ENCODE measurements at regions of chr19 and their contacts with region 1.

Region 1: DNA sequence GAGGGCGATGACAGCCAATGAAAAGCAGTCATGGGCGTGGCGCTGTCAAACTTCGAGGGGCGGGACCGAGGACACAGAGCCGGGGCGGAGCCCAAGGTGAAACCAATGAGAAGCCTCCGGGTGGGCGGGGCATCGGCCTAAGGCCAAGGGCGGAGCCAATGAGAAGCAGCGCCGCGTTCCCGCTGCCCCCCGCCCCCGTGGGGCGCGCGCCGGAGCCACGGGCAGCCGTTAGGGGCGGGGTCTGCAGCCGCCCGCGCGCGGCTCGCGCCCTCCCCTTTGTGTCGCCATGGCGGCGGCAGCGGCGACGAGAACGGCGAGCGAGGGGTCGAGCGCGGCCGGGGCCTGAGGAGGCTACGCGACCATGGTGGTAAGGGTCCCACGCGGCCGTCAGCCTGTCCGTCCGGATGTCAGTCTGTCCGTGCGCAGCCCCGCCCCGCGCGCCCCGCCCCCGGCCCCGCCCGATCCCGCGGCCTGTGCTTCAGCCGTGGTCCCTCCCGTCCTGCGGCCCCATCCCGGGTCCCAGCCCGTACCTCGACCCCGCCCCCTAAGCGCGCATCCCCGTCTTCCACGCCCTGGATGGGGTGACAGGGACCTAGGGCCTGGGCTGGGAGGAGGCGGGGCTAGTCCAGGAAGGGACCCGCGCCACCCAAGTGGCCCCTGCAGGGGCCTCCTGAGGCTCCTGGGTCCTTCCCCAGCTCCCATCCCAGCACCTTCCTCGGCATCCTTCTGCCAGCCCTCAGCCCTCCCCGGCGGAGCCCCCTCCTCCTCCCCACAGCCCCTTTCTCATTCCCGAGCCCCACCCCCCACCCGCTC is at the start of gene ARHGAP33:
- DNase-seq: peak; percentile 100
- ATAC-seq: peak; percentile 98
- H3K4me3 Mint-ChIP-seq: peak within 1 kb of the TSS; percentile 75
- H3K27ac Mint-ChIP-seq: no peak within 1 kb of the TSS
- H3K4me1 Mint-ChIP-seq: peaks cover 12% of the 10 kb centered on the region
- H3K27me3 Mint-ChIP-seq: no peaks in the 10 kb centered on the region
- total RNA-seq, gene ARHGAP33: 27.8 to 35.2 TPM

Region 2: GRCh38 chr19:35657904-35658700 is 117.4 kb before region 1 on chr19:
- CTCF ChIA-PET with region 1: no interaction called
- POLR2A ChIA-PET with region 1: no interaction called
- intact Hi-C with region 1: no loop called
- DNase-seq: peak; percentile 33
- ATAC-seq: peak; percentile 53
- H3K4me3 Mint-ChIP-seq: no peak overlapping the region
- H3K27ac Mint-ChIP-seq: no peak overlapping the region
- H3K4me1 Mint-ChIP-seq: peaks cover 2% of the 10 kb centered on the region
- H3K27me3 Mint-ChIP-seq: no peaks in the 10 kb centered on the region

Region 3: GRCh38 chr19:35693830-35694599 is 81.5 kb before region 1 on chr19:
- CTCF ChIA-PET with region 1: no interaction called
- POLR2A ChIA-PET with region 1: no interaction called
- intact Hi-C with region 1: loop called in 1 of 2 experiments (anchors 1 kb)
- DNase-seq: peak; percentile 95
- ATAC-seq: peak; percentile 97
- H3K4me3 Mint-ChIP-seq: no peak overlapping the region
- H3K27ac Mint-ChIP-seq: peak overlapping the region; percentile 43
- H3K4me1 Mint-ChIP-seq: peaks cover 17% of the 10 kb centered on the region
- H3K27me3 Mint-ChIP-seq: no peaks in the 10 kb centered on the region

Region 4: GRCh38 chr19:35740423-35741202 is 34.9 kb before region 1 on chr19:
- CTCF ChIA-PET with region 1: no interaction called
- POLR2A ChIA-PET with region 1: no interaction called
- intact Hi-C with region 1: loop called (anchors 1 to 2 kb)
- DNase-seq: peak; percentile 99
- ATAC-seq: peak; percentile 67
- H3K4me3 Mint-ChIP-seq: peak overlapping the region; percentile 82
- H3K27ac Mint-ChIP-seq: peak overlapping the region; percentile 96
- H3K4me1 Mint-ChIP-seq: peaks cover 28% of the 10 kb centered on the region
- H3K27me3 Mint-ChIP-seq: no peaks in the 10 kb centered on the region

Region 5: GRCh38 chr19:35757749-35758608 is 17.5 kb before region 1 on chr19 and contains the start of gene PROSER3:
- CTCF ChIA-PET with region 1: no interaction called
- POLR2A ChIA-PET with region 1: no interaction called
- intact Hi-C with region 1: loop called (anchors 1 to 2 kb)
- DNase-seq: peak; percentile 99
- ATAC-seq: peak; percentile 98
- H3K4me3 Mint-ChIP-seq: peak within 1 kb of the TSS; percentile 85
- H3K27ac Mint-ChIP-seq: peak within 1 kb of the TSS; percentile 91
- H3K4me1 Mint-ChIP-seq: peaks cover 29% of the 10 kb centered on the region
- H3K27me3 Mint-ChIP-seq: peaks cover 4% of the 10 kb centered on the region
- total RNA-seq, gene PROSER3: 39.8 to 62.8 TPM

Region 6: GRCh38 chr19:35899547-35900214 is 124.2 kb after region 1 on chr19:
- CTCF ChIA-PET with region 1: no interaction called
- POLR2A ChIA-PET with region 1: no interaction called
- intact Hi-C with region 1: loop called in 1 of 2 experiments (anchors 1 kb)
- DNase-seq: peak; percentile 94
- ATAC-seq: peak; percentile 54
- H3K4me3 Mint-ChIP-seq: peak overlapping the region; percentile 75
- H3K27ac Mint-ChIP-seq: peak overlapping the region; percentile 94
- H3K4me1 Mint-ChIP-seq: peaks cover 65% of the 10 kb centered on the region
- H3K27me3 Mint-ChIP-seq: no peaks in the 10 kb centered on the region

Region 7: GRCh38 chr19:36139473-36140303 is 364.2 kb after region 1 on chr19 and contains the start of gene CAPNS1:
- CTCF ChIA-PET with region 1: no interaction called
- POLR2A ChIA-PET with region 1: no interaction called
- intact Hi-C with region 1: loop called in 1 of 2 experiments (anchors 1 kb)
- DNase-seq: peak; percentile 96
- ATAC-seq: peak; percentile 74
- H3K4me3 Mint-ChIP-seq: peak within 1 kb of the TSS; percentile 97
- H3K27ac Mint-ChIP-seq: peak within 1 kb of the TSS; percentile 97
- H3K4me1 Mint-ChIP-seq: peaks cover 26% of the 10 kb centered on the region
- H3K27me3 Mint-ChIP-seq: no peaks in the 10 kb centered on the region
- total RNA-seq, gene CAPNS1: 345 to 452 TPM

Measured in activated CD4-positive, alpha-beta T cell treated with anti-CD3 and anti-CD28 coated beads for 36 hours (primary cell).